Heart right ventricle (tissue), 16 donors: ENCODE measurements at regions of chr13 and their contacts with region 1.

Region 1: GRCh38 chr13:79541426-79542049 is 60.6 kb downstream of the NDFIP2 start:
- DNase-seq: no peak
- ATAC-seq: peak in 1 of 8 donors; percentile 53
- H3K4me3 ChIP-seq: no peak overlapping the region
- H3K27ac ChIP-seq: no peak overlapping the region
- H3K4me1 ChIP-seq: no peaks in the 10 kb centered on the region
- H3K27me3 ChIP-seq: no peaks in the 10 kb centered on the region
- CTCF ChIP-seq: peak; percentile 73 to 94 (median 84)

Region 2: GRCh38 chr13:79405829-79406596 is 135.5 kb before region 1 on chr13 and contains the start of gene RBM26:
- intact Hi-C with region 1: loop called in 1 of 10 experiments (anchors 5 kb)
- DNase-seq: peak; percentile 92 to 97
- ATAC-seq: peak; percentile 96 to 98 (median 96)
- H3K4me3 ChIP-seq: peak within 1 kb of the TSS; percentile 61 to 94 (median 87)
- H3K27ac ChIP-seq: peak within 1 kb of the TSS; percentile 68 to 97 (median 94)
- H3K4me1 ChIP-seq: peaks cover 0 to 58% (median 48%) of the 10 kb centered on the region in 9 donors
- H3K27me3 ChIP-seq: no peaks in the 10 kb centered on the region
- CTCF ChIP-seq: peak in 3 of 9 donors; percentile 13 to 30 (median 24)
- total RNA-seq, gene RBM26: 18.6 to 28.6 (median 24.5) TPM

Region 3: GRCh38 chr13:79423801-79424642 is 117.5 kb before region 1 on chr13:
- intact Hi-C with region 1: loop called (anchors 1 to 5 kb)
- DNase-seq: no peak
- ATAC-seq: peak in 2 of 8 donors; percentile 49 to 58
- H3K4me3 ChIP-seq: no peak overlapping the region
- H3K27ac ChIP-seq: no peak overlapping the region
- H3K4me1 ChIP-seq: no peaks in the 10 kb centered on the region
- H3K27me3 ChIP-seq: no peaks in the 10 kb centered on the region
- CTCF ChIP-seq: peak; percentile 48 to 81 (median 71)

Region 4: DNA sequence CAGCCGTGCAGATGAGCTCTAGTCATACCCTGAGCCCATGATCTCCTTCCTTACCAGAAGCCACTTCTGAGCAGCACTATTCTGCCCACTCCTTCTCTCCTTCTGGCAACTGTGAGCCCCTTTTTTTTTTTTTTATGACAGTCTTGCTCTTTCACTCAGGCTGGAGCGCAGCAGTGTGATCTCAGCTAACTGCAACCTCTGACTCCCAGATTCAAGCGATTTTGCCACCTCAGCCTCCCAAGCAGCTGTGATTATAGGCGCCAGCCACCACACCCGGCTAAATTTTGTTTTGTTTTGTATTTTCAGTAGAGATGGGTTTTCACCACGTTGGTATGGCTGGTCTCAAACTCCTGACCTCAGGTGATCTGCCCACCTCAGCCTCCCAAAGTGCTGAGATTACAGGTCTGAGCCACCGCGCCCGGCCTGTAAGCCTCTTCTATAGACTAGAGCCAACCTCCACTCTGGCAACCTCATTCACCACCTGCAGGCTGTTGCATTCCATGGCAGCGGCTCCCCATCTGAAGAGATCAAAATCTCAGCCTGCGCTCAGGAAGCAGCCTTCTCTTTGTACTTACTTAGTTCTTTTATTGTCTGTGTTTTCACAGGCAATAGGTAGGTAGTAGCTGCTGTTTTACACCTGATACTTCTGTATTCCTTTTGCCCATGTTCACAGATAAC is 95.4 kb before region 1 on chr13:
- intact Hi-C with region 1: no loop called
- DNase-seq: no peak
- ATAC-seq: no peak
- H3K4me3 ChIP-seq: no peak overlapping the region
- H3K27ac ChIP-seq: no peak overlapping the region
- H3K4me1 ChIP-seq: peaks cover 0 to 6% (median 0%) of the 10 kb centered on the region in 9 donors
- H3K27me3 ChIP-seq: no peaks in the 10 kb centered on the region
- CTCF ChIP-seq: no peak